ENCODE measurements at regions of chr2 and their contacts with region 1.

Region 1: GRCh38 chr2:30231212-30231995 is at the start of gene LBH:
- DNase-seq: peak; percentile 74 to 92 (median 88)
- ATAC-seq: peak; percentile 72
- H3K4me3 ChIP-seq: peak within 1 kb of the TSS; percentile 75
- H3K4me3 Mint-ChIP-seq: peak within 1 kb of the TSS; percentile 87 to 98 (median 94)
- H3K27ac ChIP-seq: peak within 1 kb of the TSS; percentile 97
- H3K27ac Mint-ChIP-seq: peak within 1 kb of the TSS; percentile 87 to 100 (median 96)
- H3K4me1 ChIP-seq: peaks cover 49 to 55% of the 10 kb centered on the region in 2 donors
- H3K4me1 Mint-ChIP-seq: peaks cover 26 to 65% (median 57%) of the 10 kb centered on the region in 7 donors
- H3K27me3 ChIP-seq: no peaks in the 10 kb centered on the region
- H3K27me3 Mint-ChIP-seq: peaks cover 0 to 8% (median 0%) of the 10 kb centered on the region in 5 donors
- total RNA-seq, gene LBH: 146 to 517 (median 192) TPM

Region 2: GRCh38 chr2:30208452-30208851 is 23.0 kb before region 1 on chr2:
- CTCF ChIA-PET with region 1: interaction called, 220 read pairs
- POLR2A ChIA-PET with region 1: interaction called, 353 read pairs
- intact Hi-C with region 1: loop called (anchors 1 to 2 kb)
- DNase-seq: peak in 4 of 9 donors; percentile 19 to 42 (median 28)
- ATAC-seq: peak; percentile 69
- H3K4me3 ChIP-seq: peak overlapping the region; percentile 3
- H3K4me3 Mint-ChIP-seq: peak overlapping the region; percentile 14 to 80 (median 68)
- H3K27ac ChIP-seq: peak overlapping the region; percentile 25
- H3K27ac Mint-ChIP-seq: peak overlapping the region in 8 of 9 donors; percentile 82 to 95 (median 88)
- H3K4me1 ChIP-seq: peaks cover 8 to 33% of the 10 kb centered on the region in 2 donors
- H3K4me1 Mint-ChIP-seq: peaks cover 14 to 44% (median 35%) of the 10 kb centered on the region in 7 donors
- H3K27me3 ChIP-seq: no peaks in the 10 kb centered on the region
- H3K27me3 Mint-ChIP-seq: peaks cover 0 to 7% (median 0%) of the 10 kb centered on the region in 5 donors

Region 3: DNA sequence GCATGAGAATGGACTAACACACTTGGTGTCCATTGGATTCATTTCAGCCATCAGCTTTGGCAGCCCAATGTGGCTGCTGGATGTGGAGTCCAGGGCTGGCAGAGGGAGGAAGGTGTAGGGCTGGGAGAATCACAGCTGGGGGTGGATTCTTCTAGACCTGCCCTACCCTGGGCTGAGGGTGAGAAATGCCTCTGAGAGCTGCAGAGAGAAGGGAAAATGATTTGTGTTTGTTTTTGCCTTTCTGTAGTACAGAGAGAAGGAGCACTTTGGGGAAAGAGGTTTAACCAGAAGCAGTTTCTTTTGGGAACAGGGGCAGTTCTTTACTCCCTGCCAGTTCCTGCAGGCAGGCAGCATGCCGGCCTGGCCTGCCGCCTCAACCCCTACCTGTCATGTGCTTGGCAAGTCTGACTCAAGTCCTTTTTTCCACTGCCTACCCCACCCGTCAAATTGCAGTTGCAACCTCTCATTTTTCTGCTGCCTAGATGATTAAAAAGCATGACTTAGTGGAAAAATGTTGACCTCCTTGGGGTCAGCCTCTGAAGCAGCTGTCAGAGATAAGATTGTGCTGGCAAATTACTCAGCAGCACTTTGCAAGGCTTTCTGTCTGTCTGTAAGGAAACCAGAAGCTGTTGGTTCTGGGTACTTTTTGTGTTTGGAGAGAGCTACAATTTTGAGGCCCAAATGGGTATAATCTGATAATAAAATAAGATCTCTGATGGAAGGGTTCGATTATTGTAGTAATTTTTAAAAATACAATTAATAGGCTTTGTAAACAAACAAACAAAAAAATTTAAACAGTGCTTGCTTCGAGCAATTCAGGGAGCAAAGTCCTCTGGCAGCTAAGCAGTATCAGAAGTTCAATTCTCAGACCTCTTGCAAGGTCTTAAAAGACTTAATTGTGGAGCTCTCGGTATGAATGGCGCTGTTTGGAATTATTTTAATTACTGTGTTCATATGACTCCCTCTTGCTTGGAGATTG is 21.6 kb after region 1 on chr2:
- CTCF ChIA-PET with region 1: interaction called, 12 read pairs
- POLR2A ChIA-PET with region 1: interaction called, 901 read pairs
- intact Hi-C with region 1: loop called (anchors 1 to 2 kb)
- DNase-seq: peak in 4 of 9 donors; percentile 38 to 83 (median 53)
- ATAC-seq: peak; percentile 36
- H3K4me3 ChIP-seq: no peak overlapping the region
- H3K4me3 Mint-ChIP-seq: peak overlapping the region; percentile 53 to 79 (median 72)
- H3K27ac ChIP-seq: peak overlapping the region; percentile 86
- H3K27ac Mint-ChIP-seq: peak overlapping the region; percentile 72 to 100 (median 97)
- H3K4me1 ChIP-seq: peaks cover 77 to 93% of the 10 kb centered on the region in 2 donors
- H3K4me1 Mint-ChIP-seq: peaks cover 65 to 99% (median 97%) of the 10 kb centered on the region in 7 donors
- H3K27me3 ChIP-seq: no peaks in the 10 kb centered on the region
- H3K27me3 Mint-ChIP-seq: no peaks in the 10 kb centered on the region

Region 4: DNA sequence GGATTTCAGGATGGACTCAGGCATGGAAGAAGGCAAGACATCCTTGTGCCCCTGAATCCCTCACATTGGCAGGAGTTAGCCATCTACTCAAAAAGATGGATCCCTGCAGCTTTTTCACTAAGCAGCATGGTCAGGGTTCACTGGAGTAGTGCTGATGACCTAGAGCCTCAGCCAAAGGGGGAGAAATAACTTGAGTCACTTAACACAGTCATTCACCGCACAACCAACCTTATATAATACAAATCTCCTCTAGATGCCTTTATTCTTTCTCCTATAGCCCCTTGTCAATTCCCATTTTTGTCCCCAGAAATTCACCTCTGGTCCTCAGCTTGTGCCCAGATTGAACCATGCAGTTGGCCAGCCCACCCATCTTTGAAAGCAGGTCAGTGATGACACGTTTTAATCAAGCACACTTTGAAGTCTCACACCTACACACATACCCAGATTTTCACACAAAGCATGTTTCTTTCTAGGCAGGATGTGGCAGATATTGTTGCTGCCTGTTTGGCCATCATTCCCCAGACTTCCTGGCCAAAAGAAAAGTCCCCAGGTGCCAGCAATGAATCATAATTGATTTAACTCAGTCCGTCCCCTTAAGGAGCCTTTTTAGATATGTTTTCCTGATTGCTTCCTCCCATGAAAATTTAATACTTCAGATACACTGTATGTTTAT is 84.1 kb after region 1 on chr2:
- CTCF ChIA-PET with region 1: no interaction called
- POLR2A ChIA-PET with region 1: interaction called, 3 read pairs
- intact Hi-C with region 1: loop called in 1 of 2 experiments (anchors 5 kb)
- DNase-seq: peak in 6 of 9 donors; percentile 22 to 51 (median 43)
- ATAC-seq: peak; percentile 81
- H3K4me3 ChIP-seq: no peak overlapping the region
- H3K4me3 Mint-ChIP-seq: peak overlapping the region; percentile 24 to 81 (median 71)
- H3K27ac ChIP-seq: peak overlapping the region; percentile 24
- H3K27ac Mint-ChIP-seq: peak overlapping the region; percentile 75 to 97 (median 91)
- H3K4me1 ChIP-seq: peaks cover 15 to 40% of the 10 kb centered on the region in 2 donors
- H3K4me1 Mint-ChIP-seq: peaks cover 35 to 65% (median 61%) of the 10 kb centered on the region in 7 donors
- H3K27me3 ChIP-seq: no peaks in the 10 kb centered on the region
- H3K27me3 Mint-ChIP-seq: no peaks in the 10 kb centered on the region

Region 5: DNA sequence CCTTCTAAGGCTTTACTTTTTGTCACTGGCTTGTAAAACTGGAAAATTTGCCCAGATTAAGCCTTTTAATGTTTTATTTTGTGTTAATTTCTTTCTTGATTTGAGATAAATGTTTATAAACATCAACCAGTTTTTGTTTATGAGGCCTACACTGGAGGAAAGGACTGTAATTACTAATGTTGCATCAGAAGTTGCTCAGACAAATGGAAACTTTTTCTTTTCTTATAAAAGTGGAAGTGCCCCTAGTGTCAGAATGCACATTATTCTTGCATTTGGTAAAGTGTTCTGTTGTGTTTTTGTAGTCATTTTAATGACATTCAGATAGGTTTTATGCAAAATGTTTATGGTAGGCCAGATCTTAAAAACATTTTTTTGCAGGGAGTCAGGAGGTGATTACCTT is 240.9 kb after region 1 on chr2:
- CTCF ChIA-PET with region 1: interaction called, 28 read pairs
- POLR2A ChIA-PET with region 1: interaction called, 6 read pairs
- intact Hi-C with region 1: loop called in 1 of 2 experiments (anchors 1 kb)
- DNase-seq: peak in 1 of 9 donors; percentile 14
- ATAC-seq: no peak
- H3K4me3 ChIP-seq: no peak overlapping the region
- H3K4me3 Mint-ChIP-seq: no peak overlapping the region
- H3K27ac ChIP-seq: no peak overlapping the region
- H3K27ac Mint-ChIP-seq: peak overlapping the region in 2 of 9 donors; percentile 0 to 25
- H3K4me1 ChIP-seq: peaks cover 0 to 20% of the 10 kb centered on the region in 2 donors
- H3K4me1 Mint-ChIP-seq: peaks cover 14 to 78% (median 40%) of the 10 kb centered on the region in 7 donors
- H3K27me3 ChIP-seq: no peaks in the 10 kb centered on the region
- H3K27me3 Mint-ChIP-seq: no peaks in the 10 kb centered on the region